Activated CD4-positive, alpha-beta T cell treated with anti-CD3 and anti-CD28 coated beads for 36 hours (primary cell): ENCODE measurements at regions of chr1 and their contacts with region 1.

Region 1: GRCh38 chr1:109548321-109549267 is at the start of gene GNAI3:
- DNase-seq: peak; percentile 97
- ATAC-seq: peak; percentile 97
- H3K4me3 Mint-ChIP-seq: peak within 1 kb of the TSS; percentile 99
- H3K27ac Mint-ChIP-seq: peak within 1 kb of the TSS; percentile 96
- H3K4me1 Mint-ChIP-seq: peaks cover 49% of the 10 kb centered on the region
- H3K27me3 Mint-ChIP-seq: no peaks in the 10 kb centered on the region
- total RNA-seq, gene GNAI3: 7.1 to 9.6 TPM

Region 2: GRCh38 chr1:109041621-109042468 is 506.7 kb before region 1 on chr1 and contains the start of gene WDR47:
- CTCF ChIA-PET with region 1: no interaction called
- POLR2A ChIA-PET with region 1: interaction called, 4 read pairs
- intact Hi-C with region 1: loop called in 1 of 2 experiments (anchors 1 kb)
- DNase-seq: peak; percentile 98
- ATAC-seq: peak; percentile 99
- H3K4me3 Mint-ChIP-seq: peak within 1 kb of the TSS; percentile 82
- H3K27ac Mint-ChIP-seq: peak within 1 kb of the TSS; percentile 65
- H3K4me1 Mint-ChIP-seq: peaks cover 16% of the 10 kb centered on the region
- H3K27me3 Mint-ChIP-seq: no peaks in the 10 kb centered on the region
- total RNA-seq, gene WDR47: 6.9 to 7.6 TPM

Region 3: DNA sequence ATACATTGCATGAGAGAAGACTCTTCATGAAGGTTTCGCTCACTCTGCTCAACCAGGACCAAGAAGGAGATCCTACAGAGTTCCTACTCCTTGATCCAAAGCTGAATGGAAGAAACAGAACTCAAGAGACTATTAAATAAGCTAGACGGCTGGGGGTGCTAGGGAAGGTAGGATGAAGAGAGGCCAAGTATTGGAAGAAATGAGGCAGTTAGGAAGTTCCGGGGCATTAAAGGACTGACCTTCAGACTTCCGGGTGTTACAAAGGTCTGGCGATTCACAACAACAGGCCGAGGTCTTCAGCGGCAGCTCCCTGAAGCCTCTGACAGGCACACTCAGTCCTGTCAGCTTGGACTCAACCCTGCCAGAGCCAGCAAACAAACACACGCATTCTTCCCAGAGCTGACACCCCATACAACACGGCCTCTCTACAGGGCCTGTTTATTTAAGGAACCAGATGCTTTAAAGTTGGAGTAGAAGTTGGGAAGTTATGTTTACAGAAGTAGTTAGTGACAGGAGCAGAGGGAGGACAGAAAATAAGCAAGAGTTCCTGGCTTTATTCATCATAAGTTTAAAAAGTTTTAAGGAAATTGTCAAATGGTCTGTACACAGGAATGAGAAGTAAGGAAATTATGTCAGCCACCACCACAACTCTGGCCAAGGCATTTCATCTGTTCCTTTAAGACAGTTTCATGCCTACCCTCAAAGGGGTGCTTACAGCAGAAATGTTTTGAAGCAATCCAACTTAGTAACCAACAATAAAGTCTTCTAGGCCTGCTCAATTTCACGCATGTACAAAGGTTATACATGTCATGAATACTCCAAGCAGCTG is 155.6 kb before region 1 on chr1:
- CTCF ChIA-PET with region 1: no interaction called
- POLR2A ChIA-PET with region 1: no interaction called
- intact Hi-C with region 1: no loop called
- DNase-seq: no peak
- ATAC-seq: no peak
- H3K4me3 Mint-ChIP-seq: no peak overlapping the region
- H3K27ac Mint-ChIP-seq: no peak overlapping the region
- H3K4me1 Mint-ChIP-seq: peaks cover 11% of the 10 kb centered on the region
- H3K27me3 Mint-ChIP-seq: peaks cover 58% of the 10 kb centered on the region

Region 4: GRCh38 chr1:109426278-109427170 is 122.1 kb before region 1 on chr1 and contains the start of gene PSMA5:
- CTCF ChIA-PET with region 1: interaction called, 5 read pairs
- POLR2A ChIA-PET with region 1: interaction called, 9 read pairs
- intact Hi-C with region 1: loop called in 1 of 2 experiments (anchors 1 kb)
- DNase-seq: peak; percentile 97
- ATAC-seq: peak; percentile 97
- H3K4me3 Mint-ChIP-seq: peak within 1 kb of the TSS; percentile 91
- H3K27ac Mint-ChIP-seq: peak within 1 kb of the TSS; percentile 96
- H3K4me1 Mint-ChIP-seq: peaks cover 34% of the 10 kb centered on the region
- H3K27me3 Mint-ChIP-seq: no peaks in the 10 kb centered on the region
- total RNA-seq, gene PSMA5: 151 to 249 TPM

Region 5: DNA sequence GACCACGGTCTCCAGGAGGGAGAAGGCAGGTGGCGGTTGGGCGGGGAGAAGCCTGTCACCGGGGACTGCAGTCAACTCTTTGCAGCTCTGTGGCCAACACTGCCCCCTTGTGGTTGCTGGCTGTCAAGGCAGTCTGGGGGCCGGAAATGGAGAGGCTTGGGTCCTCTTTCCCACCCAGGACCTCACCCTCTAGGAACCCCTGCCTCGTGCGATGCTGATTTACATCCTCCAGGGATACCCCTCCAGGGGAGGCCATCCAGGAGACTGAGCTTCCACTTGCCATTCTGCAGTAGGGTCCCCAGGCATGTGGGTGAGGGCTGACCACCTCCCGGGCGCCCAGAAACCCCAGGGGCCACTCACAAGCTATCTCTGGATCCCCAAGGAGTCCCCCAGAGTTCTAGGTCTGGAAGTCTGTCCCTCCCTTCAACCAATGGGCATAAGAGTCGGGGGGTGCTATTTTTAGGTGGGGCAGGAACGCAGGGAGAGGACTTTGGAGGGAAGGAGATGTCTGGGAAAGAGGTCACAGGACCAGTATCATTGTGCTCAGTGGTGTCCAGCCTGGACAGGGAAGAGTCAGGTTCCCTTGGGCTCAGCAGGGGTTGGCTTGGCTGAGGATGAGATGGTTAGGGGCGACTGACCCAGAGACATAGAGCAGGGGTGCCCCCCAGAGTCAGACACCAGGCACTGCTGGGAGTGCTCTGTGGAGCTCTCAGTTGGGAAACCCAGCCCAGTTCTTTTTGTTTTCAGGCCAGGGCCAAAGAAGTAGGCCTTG is 16.0 kb before region 1 on chr1:
- CTCF ChIA-PET with region 1: interaction called, 36 read pairs
- POLR2A ChIA-PET with region 1: interaction called, 3 read pairs
- intact Hi-C with region 1: no loop called
- DNase-seq: peak; percentile 95
- ATAC-seq: peak; percentile 90
- H3K4me3 Mint-ChIP-seq: peak overlapping the region; percentile 15
- H3K27ac Mint-ChIP-seq: peak overlapping the region; percentile 71
- H3K4me1 Mint-ChIP-seq: peaks cover 22% of the 10 kb centered on the region
- H3K27me3 Mint-ChIP-seq: no peaks in the 10 kb centered on the region

Region 6: GRCh38 chr1:109643385-109644230 is 95.0 kb after region 1 on chr1:
- CTCF ChIA-PET with region 1: interaction called, 190 read pairs
- POLR2A ChIA-PET with region 1: interaction called, 10 read pairs
- intact Hi-C with region 1: loop called (anchors 1 to 2 kb)
- DNase-seq: peak; percentile 95
- ATAC-seq: peak; percentile 98
- H3K4me3 Mint-ChIP-seq: no peak overlapping the region
- H3K27ac Mint-ChIP-seq: no peak overlapping the region
- H3K4me1 Mint-ChIP-seq: peaks cover 10% of the 10 kb centered on the region
- H3K27me3 Mint-ChIP-seq: no peaks in the 10 kb centered on the region

Region 7: DNA sequence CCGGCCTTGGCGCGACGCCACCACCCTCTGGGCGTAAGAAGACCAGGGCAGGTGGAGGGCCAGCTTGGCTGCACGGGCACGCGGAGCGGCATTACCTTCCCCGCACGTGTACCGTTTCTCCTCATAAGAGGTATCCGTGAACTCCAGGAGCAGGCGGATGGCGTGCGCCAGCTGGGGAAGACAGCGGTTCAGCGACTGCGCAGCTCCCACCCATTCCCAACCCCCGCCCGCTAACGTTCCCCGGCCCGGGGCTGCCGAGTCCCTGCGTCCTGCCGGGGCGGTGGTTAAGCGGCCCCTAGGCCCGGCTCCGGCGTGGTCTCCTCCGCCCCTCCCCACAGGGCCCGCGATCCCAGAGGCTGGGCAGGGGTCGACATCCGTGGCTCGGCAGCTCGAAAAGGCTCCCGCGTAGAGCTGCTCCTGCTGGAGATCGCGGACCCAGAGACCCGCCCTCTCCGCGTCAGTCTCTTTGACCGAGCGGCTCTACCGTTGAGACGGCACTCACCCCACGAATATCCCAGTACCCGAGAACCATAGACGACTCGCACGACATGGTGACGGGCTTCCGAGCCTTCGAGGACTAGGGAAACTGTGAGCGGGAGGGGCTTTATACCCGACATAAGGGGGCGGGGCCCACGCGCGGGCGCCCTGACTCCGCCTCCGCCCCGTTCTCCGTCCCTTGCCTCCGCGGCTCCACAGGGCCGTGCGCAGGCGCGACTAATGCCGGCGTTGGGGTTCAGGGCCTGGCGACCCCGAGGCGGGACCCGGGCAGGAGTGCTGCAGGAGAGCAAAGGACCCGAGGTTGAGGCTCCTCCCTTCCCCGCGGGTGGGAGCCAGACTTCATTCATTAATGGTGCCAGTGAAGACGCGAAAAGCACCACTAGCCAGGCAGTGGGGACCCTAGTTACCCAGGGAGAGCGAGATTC is 191.4 kb after region 1 on chr1:
- CTCF ChIA-PET with region 1: interaction called, 3 read pairs
- POLR2A ChIA-PET with region 1: no interaction called
- intact Hi-C with region 1: loop called in 1 of 2 experiments (anchors 1 kb)
- DNase-seq: peak; percentile 92
- ATAC-seq: peak; percentile 99
- H3K4me3 Mint-ChIP-seq: peak overlapping the region; percentile 82
- H3K27ac Mint-ChIP-seq: peak overlapping the region; percentile 79
- H3K4me1 Mint-ChIP-seq: peaks cover 16% of the 10 kb centered on the region
- H3K27me3 Mint-ChIP-seq: peaks cover 1% of the 10 kb centered on the region

Region 8: GRCh38 chr1:109828756-109829505 is 280.3 kb after region 1 on chr1:
- CTCF ChIA-PET with region 1: no interaction called
- POLR2A ChIA-PET with region 1: no interaction called
- intact Hi-C with region 1: no loop called
- DNase-seq: no peak
- ATAC-seq: no peak
- H3K4me3 Mint-ChIP-seq: no peak overlapping the region
- H3K27ac Mint-ChIP-seq: no peak overlapping the region
- H3K4me1 Mint-ChIP-seq: peaks cover 8% of the 10 kb centered on the region
- H3K27me3 Mint-ChIP-seq: no peaks in the 10 kb centered on the region

Region 9: DNA sequence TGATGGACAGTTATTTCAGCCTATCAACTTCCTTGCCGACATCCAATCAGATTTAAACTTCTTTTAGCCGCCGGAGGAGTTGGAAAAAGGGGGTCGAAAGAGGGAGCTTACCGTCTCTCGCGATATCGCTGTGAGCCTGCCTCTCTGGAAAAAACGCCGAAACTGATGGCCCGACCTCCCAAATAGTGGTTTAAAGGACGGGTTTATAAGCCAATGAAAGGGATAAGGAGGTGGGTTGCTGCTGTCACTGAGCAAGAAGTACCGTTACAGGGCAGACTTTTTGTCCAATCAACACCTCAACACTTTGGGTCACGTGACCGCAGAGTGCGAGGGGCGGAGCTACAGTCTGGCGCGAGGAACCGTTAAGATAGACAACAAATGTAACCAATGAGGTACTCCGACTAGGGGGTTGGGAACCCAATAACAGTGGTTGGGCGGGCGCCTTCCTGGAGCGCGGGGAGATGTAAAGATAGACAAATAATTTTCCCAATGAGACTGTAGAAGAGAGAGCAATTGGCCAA is 790.4 kb after region 1 on chr1 and contains the start of gene RBM15:
- CTCF ChIA-PET with region 1: no interaction called
- POLR2A ChIA-PET with region 1: no interaction called
- intact Hi-C with region 1: loop called in 1 of 2 experiments (anchors 1 kb)
- DNase-seq: peak; percentile 97
- ATAC-seq: peak; percentile 83
- H3K4me3 Mint-ChIP-seq: no peak within 1 kb of the TSS
- H3K27ac Mint-ChIP-seq: no peak within 1 kb of the TSS
- H3K4me1 Mint-ChIP-seq: peaks cover 48% of the 10 kb centered on the region
- H3K27me3 Mint-ChIP-seq: no peaks in the 10 kb centered on the region
- total RNA-seq, gene RBM15: 60.7 to 63.2 TPM